ENCODE measurements at regions of chr3 and their contacts with region 1.

Region 1: DNA sequence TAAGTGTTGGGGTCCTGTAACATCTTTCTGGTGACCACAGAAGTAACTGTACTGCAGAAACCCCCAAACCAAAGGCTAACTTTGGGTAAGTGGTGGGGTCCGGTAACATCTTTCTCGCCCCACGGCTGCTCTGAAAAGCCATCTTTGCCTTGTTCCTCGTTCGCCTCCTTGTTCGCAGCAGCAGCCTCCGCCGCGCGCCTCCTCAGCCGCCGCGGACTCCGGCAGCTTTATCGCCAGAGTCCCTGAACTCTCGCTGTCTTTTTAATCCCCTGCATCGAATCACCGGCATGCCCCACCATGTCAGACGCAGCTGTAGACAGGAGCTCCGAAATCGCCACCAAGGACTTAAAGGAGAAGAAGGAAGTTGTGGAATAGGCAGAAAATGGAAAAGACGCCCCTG is 316.8 kb downstream of the TUSC7 start:
- DNase-seq: no peak
- ATAC-seq: no peak
- H3K4me3 ChIP-seq: no peak overlapping the region
- H3K27ac ChIP-seq: no peak overlapping the region
- H3K4me1 ChIP-seq: no peaks in the 10 kb centered on the region
- H3K27me3 ChIP-seq: no peaks in the 10 kb centered on the region
- CTCF ChIP-seq: no peak
- POLR2A ChIP-seq: no peak

Region 2: GRCh38 chr3:117531078-117531767 is 504.8 kb after region 1 on chr3:
- intact Hi-C with region 1: loop called (anchors 10 kb)
- DNase-seq: no peak
- ATAC-seq: no peak
- H3K4me3 ChIP-seq: no peak overlapping the region
- H3K27ac ChIP-seq: no peak overlapping the region
- H3K4me1 ChIP-seq: no peaks in the 10 kb centered on the region
- H3K27me3 ChIP-seq: no peaks in the 10 kb centered on the region
- CTCF ChIP-seq: no peak
- POLR2A ChIP-seq: no peak